GM12878 (cell line): ENCODE measurements at regions of chrX and their contacts with region 1.

Region 1: DNA sequence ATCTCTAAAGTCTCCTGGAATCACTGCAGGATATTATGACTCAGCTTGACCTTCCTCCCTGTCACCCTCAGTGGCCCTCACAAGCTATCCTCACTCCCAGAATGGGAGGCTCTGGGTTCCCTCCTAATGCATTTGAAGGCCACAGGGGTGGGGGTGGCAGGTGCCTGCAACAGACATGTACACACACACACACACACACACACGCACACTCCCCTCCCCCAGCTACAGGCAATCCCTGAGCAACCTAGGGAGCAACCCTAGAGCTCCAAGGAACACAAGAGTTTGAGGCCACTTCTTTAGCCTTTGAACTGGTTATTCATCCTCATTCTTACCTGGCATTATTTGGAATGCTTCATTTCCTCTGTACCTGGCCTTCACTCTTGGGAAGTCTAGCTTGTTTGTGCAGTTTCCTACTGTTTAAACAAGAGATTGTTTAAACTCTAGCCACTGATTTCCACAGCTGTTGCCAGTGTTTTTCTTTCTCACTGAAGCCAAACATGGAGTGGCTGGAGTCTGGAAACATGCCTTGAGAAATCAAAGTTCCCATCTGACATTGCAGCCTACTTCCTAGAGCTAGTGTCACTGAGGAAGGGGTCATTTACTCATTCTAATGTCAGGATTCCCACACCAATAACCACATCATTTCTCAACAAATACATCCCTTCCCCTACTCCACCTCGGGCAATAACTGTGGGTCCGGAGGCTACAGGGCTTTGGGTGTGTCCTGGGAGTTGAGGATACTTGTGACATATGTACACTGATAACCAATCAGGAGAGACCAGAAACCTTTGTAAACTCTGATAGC is 37.7 kb downstream of the MAOA start:
- DNase-seq: no peak
- ATAC-seq: no peak
- H3K4me3 ChIP-seq: no peak overlapping the region
- H3K27ac ChIP-seq: no peak overlapping the region
- H3K4me1 ChIP-seq: no peaks in the 10 kb centered on the region
- H3K27me3 ChIP-seq: peaks cover 0 to 3% of the 10 kb centered on the region in 2 experiments; a peak in 2 of 4 replicates
- CTCF ChIP-seq: no peak
- EP300 ChIP-seq: no peak
- POLR2A ChIP-seq: no peak
- RAD21 ChIP-seq: no peak

Region 2: GRCh38 chrX:43676971-43677572 is 16.7 kb before region 1 on chrX:
- CTCF ChIA-PET with region 1: no interaction called
- POLR2A ChIA-PET with region 1: no interaction called
- RAD21 ChIA-PET with region 1: no interaction called
- SMC1A ChIA-PET with region 1: interaction called, 3 read pairs
- in situ Hi-C with region 1: no loop called
- intact Hi-C with region 1: loop called (anchors 1 kb)
- DNase-seq: no peak
- ATAC-seq: no peak
- H3K4me3 ChIP-seq: no peak overlapping the region
- H3K27ac ChIP-seq: no peak overlapping the region
- H3K4me1 ChIP-seq: no peaks in the 10 kb centered on the region
- H3K27me3 ChIP-seq: no peaks in the 10 kb centered on the region
- CTCF ChIP-seq: no peak
- EP300 ChIP-seq: no peak
- POLR2A ChIP-seq: no peak
- RAD21 ChIP-seq: no peak

Region 3: DNA sequence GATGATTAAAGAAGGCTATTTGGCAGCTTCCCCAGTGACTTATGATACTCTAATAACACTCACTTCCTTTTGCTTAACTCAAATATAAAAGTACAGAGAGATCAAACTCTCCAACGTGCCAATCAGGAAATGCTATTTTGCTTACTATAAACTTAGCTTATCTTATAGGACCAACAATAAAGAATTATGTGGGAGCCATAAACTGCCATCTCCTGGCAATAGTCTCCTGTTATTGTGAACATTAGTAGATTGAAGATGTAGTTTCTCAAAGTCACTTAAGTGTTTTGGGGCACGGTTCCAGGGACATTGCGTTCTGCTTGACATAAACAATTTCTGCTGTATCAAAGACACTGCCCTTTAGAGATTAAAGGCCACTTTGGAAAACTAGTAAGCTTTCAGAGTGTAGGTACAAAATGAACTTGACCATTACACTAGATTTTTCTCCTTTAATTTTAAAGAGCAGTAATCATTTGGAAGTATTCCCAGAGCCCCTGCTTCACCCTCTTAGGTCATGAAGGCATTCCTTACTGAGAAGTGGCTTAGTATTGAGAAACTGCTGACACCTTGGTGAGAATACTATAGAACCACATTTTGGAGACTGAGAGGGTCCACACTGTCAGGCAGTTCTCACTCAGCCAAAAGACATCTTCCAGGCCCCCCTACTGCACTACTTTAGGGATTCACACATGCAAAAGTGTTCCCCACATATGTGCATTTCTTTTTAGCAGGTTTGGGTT is 14.2 kb after region 1 on chrX:
- CTCF ChIA-PET with region 1: no interaction called
- POLR2A ChIA-PET with region 1: no interaction called
- RAD21 ChIA-PET with region 1: no interaction called
- SMC1A ChIA-PET with region 1: no interaction called
- in situ Hi-C with region 1: no loop called
- intact Hi-C with region 1: no loop called
- DNase-seq: no peak
- ATAC-seq: no peak
- H3K4me3 ChIP-seq: no peak overlapping the region
- H3K27ac ChIP-seq: no peak overlapping the region
- H3K4me1 ChIP-seq: no peaks in the 10 kb centered on the region
- H3K27me3 ChIP-seq: no peaks in the 10 kb centered on the region; a peak in 1 of 4 replicates
- CTCF ChIP-seq: no peak
- EP300 ChIP-seq: no peak
- POLR2A ChIP-seq: no peak
- RAD21 ChIP-seq: no peak